Activated CD4-positive, alpha-beta memory T cell treated with anti-CD3 and anti-CD28 coated beads, Interleukin-2, amount 10 ng/mL, durations not matched to agents 7 days and 5 days (primary cell): ENCODE measurements at regions of chr15 and their contacts with region 1.

Region 1: GRCh38 chr15:79896637-79897379 is at the start of gene MTHFS:
- DNase-seq: peak; percentile 80
- H3K4me3 Mint-ChIP-seq: peak within 1 kb of the TSS; percentile 100
- H3K27ac Mint-ChIP-seq: peak within 1 kb of the TSS; percentile 99
- H3K4me1 Mint-ChIP-seq: peaks cover 48% of the 10 kb centered on the region
- H3K27me3 Mint-ChIP-seq: no peaks in the 10 kb centered on the region
- total RNA-seq, gene MTHFS: 20.2 to 22.6 TPM

Region 2: GRCh38 chr15:79872358-79873017 is 24.3 kb before region 1 on chr15:
- CTCF ChIA-PET with region 1: no interaction called
- POLR2A ChIA-PET with region 1: interaction called, 12 read pairs
- DNase-seq: peak; percentile 68
- H3K4me3 Mint-ChIP-seq: no peak overlapping the region
- H3K27ac Mint-ChIP-seq: peak overlapping the region; percentile 25
- H3K4me1 Mint-ChIP-seq: peaks cover 16% of the 10 kb centered on the region
- H3K27me3 Mint-ChIP-seq: no peaks in the 10 kb centered on the region

Region 3: DNA sequence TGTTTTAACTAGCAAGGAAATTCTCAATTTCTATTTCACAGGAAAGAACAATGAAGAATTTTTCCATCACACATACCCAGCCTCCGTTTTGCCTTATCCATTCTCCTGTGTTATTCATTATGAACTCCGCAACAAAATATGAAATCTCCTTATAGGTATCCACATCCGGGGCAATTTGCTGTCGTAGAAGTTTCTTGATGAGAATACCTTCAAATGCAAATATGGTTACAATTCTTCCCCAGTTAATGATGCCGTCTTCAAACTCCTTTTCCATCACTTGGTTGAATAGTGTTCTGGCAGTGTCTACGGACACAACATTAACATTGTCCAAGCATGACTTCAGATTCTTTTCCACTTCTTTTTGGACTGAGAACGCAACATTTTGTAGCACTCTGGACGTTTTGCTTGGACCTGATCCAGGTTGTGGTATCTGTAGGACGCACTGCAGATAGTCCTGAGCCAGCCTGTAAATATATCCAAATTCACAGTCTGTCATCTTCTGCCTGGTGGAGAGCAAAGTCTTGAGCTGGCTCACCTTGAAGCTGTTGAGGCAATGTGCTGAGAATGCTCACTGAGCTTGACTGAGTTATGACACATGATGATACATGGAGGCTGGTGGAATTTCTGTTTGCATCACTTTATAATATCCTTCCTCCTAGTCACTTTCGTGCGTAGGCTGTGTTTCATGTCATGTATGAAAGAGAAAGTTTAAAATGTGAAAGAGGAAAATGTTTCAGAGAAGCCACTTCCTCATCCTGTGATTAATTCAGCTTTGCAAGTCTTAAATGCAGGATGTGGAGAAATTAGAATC is 74.0 kb after region 1 on chr15 and contains the start of gene BCL2A1:
- CTCF ChIA-PET with region 1: interaction called, 8 read pairs
- POLR2A ChIA-PET with region 1: interaction called, 124 read pairs
- DNase-seq: peak; percentile 59
- H3K4me3 Mint-ChIP-seq: peak within 1 kb of the TSS; percentile 83
- H3K27ac Mint-ChIP-seq: peak within 1 kb of the TSS; percentile 76
- H3K4me1 Mint-ChIP-seq: peaks cover 59% of the 10 kb centered on the region
- H3K27me3 Mint-ChIP-seq: no peaks in the 10 kb centered on the region
- total RNA-seq, gene BCL2A1: 12.3 to 14.1 TPM

Region 4: DNA sequence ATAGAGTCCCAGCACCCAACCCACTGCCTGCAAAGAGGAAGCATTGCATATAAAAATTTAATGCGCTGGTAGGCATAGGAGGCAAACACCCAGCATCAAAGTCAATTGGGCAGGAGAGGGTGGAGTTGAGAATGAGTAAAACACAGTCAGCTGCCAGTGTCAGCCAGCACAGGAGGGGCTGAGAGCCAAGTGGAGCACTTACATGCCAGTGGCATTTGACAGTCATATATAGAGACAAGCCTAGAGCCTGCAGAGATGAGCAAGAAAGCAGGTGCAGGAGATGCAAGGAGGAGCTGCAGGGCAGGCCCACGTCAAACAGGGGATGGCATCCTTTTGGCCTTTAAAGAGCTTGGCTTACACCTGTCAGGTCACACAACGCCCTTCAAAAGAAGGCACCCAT is 135.0 kb after region 1 on chr15:
- CTCF ChIA-PET with region 1: no interaction called
- POLR2A ChIA-PET with region 1: interaction called, 17 read pairs
- DNase-seq: peak; percentile 30
- H3K4me3 Mint-ChIP-seq: no peak overlapping the region
- H3K27ac Mint-ChIP-seq: peak overlapping the region; percentile 83
- H3K4me1 Mint-ChIP-seq: peaks cover 35% of the 10 kb centered on the region
- H3K27me3 Mint-ChIP-seq: no peaks in the 10 kb centered on the region

Region 5: GRCh38 chr15:80072285-80072994 is 175.6 kb after region 1 on chr15:
- CTCF ChIA-PET with region 1: no interaction called
- POLR2A ChIA-PET with region 1: no interaction called
- DNase-seq: no peak
- H3K4me3 Mint-ChIP-seq: peak overlapping the region; percentile 71
- H3K27ac Mint-ChIP-seq: peak overlapping the region; percentile 50
- H3K4me1 Mint-ChIP-seq: peaks cover 36% of the 10 kb centered on the region
- H3K27me3 Mint-ChIP-seq: no peaks in the 10 kb centered on the region